ENCODE measurements at regions of chr4 and their contacts with region 1.

Region 1: DNA sequence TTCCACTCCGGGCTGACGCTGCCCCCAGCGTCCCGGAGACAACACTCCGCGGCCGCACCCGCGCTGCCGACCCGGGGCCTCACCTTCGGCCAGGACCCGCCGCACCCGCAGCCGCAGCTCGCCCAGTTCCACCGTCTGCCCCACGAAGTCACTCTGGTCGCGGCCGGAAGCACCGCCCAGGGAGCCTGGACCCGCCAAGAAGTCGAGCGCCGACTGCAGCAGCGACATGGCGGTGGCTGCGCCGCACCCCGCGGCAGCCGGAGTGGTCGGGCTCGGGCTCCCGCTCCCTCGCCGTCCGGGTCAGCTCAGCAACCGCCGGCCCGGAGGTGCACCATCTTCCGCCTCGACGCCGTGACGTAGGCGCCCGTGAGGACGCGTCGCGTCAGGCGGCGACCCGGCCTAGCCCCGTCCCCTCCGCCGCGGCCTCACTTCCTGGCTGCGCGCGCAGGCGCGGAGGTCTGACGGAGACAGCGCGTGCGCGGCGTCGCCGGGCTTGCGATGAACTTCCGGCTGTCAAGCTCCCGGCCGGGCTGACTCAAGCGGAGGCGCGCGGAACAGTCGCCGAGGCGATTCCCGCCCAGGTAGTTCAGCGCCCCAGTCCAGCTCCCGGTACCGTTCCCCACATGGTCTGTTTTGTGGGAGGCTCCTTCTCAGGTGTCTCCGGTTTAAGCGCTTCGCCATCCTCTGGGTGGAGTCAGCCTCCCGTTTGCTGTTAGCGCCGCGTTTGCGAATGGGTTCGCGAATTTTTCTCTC is at the starts of genes GAK and TMEM175:
- DNase-seq: peak; percentile 97 to 99 (median 98)
- ATAC-seq: peak; percentile 94
- H3K4me3 ChIP-seq: peak within 1 kb of the TSS; percentile 99
- H3K27ac ChIP-seq: peak within 1 kb of the TSS; percentile 93
- H3K4me1 ChIP-seq: peaks cover 13 to 14% of the 10 kb centered on the region in 2 experiments
- H3K27me3 ChIP-seq: no peaks in the 10 kb centered on the region
- CTCF ChIP-seq: no peak
- EP300 ChIP-seq: peak; percentile 35; the same call in 1 of the 2 replicates
- POLR2A ChIP-seq: peak; percentile 91
- RAD21 ChIP-seq: no peak
- polyA plus RNA-seq, gene GAK: 1.3 to 2.1 TPM
- polyA plus RNA-seq, gene TMEM175: 0.13 to 0.18 TPM

Region 2: DNA sequence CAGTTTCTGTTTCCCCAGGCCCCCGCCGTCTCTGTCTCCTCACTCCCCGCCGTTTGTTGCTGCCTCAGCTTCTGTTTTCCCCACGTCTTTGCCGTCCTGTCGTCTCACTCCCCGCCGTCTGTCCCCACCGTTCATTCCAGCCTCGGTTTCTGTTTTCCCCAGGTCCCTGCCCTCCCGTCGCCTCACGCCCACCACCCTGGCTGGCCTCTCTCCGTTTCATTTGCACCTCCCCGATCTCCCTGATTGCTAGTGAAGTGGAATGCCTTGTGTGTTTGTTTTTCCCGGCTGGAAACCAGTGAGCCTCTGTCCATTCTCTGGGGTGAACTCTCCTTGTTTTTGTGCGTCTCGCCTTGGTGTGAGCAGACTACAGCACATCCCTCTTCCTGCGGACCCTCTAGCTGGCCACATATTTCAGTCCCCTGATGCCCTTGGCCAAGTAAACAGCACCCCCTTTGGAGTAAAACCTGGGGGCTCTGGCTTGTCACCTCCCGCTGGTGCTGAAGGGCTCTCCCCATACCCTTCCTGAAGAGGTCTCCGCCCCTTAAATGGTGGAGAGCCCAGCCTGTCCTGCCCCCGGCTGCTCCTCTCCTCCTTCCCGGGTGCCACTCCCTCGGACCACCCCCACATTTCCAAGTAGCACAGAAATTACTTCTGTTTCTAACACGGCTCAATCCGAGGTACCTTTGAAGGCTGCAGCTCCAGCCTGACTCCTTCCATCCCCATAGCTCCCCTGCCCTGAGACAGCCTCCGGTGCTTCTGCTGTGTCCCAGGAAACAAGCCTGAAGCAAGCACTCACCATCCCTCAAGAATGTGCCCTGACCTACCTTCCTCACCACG is 13.4 kb after region 1 on chr4:
- CTCF ChIA-PET with region 1: no interaction called
- POLR2A ChIA-PET with region 1: interaction called, 11 read pairs
- in situ Hi-C with region 1: no loop called
- intact Hi-C with region 1: no loop called
- DNase-seq: no peak
- ATAC-seq: no peak; the same call in 2 of the 3 replicates
- H3K4me3 ChIP-seq: no peak overlapping the region
- H3K27ac ChIP-seq: no peak overlapping the region
- H3K4me1 ChIP-seq: peaks cover 0 to 42% of the 10 kb centered on the region in 2 experiments; a peak in 2 of 5 replicates
- H3K27me3 ChIP-seq: no peaks in the 10 kb centered on the region
- CTCF ChIP-seq: no peak
- EP300 ChIP-seq: no peak
- POLR2A ChIP-seq: no peak
- RAD21 ChIP-seq: no peak

Region 3: DNA sequence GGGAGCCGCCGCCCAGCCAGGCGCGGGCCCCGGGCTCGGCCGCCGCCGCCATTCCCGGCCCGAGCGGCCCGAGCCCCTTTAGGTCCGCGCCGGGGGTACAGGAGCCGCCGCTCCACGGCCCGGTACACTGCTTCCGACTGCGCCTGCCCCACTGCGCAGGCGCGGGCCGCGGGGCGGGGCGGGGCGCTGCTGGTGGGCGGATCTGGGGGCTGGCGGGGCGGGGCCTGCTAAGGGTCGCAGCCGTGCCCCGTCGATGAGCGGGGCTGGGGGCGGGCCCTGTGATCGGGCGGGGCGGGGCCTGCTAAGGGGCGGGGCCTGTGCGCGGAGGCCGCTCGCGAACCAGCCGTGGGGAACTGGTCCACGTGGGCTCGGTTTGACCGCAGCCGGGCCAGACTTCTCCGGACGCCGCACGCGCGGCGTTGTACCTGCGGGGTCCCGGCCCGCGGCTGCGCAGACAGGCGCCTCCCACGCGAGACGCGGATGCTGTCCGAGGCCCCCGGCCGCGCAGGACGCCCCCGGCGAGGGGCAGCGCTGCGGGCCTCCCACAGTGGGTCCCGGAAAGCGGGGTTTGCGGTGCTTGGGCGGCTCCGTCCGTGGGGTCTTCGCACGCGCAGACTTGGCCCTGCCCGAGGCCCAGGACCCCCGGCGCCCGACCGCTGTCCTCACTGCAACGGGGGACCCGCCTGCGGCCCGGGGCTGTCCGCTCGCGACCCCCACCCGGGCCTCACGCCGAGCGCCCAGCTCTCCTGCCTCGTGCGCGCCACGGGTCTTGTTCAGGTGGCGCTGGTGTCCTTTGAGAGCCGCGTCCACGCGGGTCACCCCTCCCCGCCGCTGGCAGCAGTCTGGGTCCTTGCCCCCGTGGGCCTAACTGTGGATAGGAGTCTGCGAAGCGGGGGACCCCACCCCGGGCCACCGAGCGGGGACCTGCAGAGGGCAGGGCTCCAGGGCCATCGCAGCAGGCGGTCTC is 41.6 kb after region 1 on chr4 and contains the start of gene DGKQ:
- CTCF ChIA-PET with region 1: no interaction called
- POLR2A ChIA-PET with region 1: no interaction called
- in situ Hi-C with region 1: no loop called
- intact Hi-C with region 1: loop called (anchors 2 kb)
- DNase-seq: peak; percentile 84 to 98 (median 97)
- ATAC-seq: peak; percentile 93
- H3K4me3 ChIP-seq: peak within 1 kb of the TSS; percentile 79
- H3K27ac ChIP-seq: peak within 1 kb of the TSS; percentile 57; the same call in 2 of the 3 replicates
- H3K4me1 ChIP-seq: peaks cover 0 to 61% of the 10 kb centered on the region in 2 experiments; a peak in 4 of 5 replicates
- H3K27me3 ChIP-seq: no peaks in the 10 kb centered on the region
- CTCF ChIP-seq: 0 out of 6 replicates have a peak, but pooled peaks of 1 of the 3 experiments have one; percentile 3
- EP300 ChIP-seq: no peak
- POLR2A ChIP-seq: peak; percentile 33; the same call in 1 of the 2 replicates
- RAD21 ChIP-seq: no peak
- polyA plus RNA-seq, gene DGKQ: 0.17 to 0.27 TPM

Region 4: DNA sequence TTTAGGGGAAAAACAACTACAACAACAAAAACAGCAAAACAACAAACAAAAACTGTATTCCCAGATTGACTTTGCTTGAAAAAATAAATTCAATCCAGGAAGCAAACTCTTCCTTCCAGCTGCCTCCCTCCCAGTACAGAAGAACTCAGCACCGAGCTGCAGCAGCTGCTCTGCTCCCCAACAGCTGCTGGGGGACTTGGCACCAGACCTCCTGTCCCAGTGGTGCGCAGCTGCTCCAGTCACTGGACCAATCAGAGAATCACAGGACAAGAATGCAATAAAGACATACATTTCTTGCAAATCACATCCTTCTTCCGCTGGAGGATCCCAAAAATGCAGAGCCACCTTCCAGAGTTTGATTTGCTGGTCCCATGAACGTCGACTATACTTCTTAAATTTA is 763.8 kb after region 1 on chr4:
- CTCF ChIA-PET with region 1: no interaction called
- POLR2A ChIA-PET with region 1: no interaction called
- in situ Hi-C with region 1: no loop called
- intact Hi-C with region 1: no loop called
- DNase-seq: no peak
- ATAC-seq: no peak
- H3K4me3 ChIP-seq: no peak overlapping the region
- H3K27ac ChIP-seq: no peak overlapping the region
- H3K4me1 ChIP-seq: no peaks in the 10 kb centered on the region
- H3K27me3 ChIP-seq: no peaks in the 10 kb centered on the region
- CTCF ChIP-seq: no peak
- EP300 ChIP-seq: no peak
- POLR2A ChIP-seq: no peak
- RAD21 ChIP-seq: no peak

Measured in K562 (cell line).